ENCODE measurements at regions of chr22 and their contacts with region 1.

Region 1: GRCh38 chr22:36977947-36978660 is 41.1 kb downstream of the TST start:
- DNase-seq: peak; percentile 95
- CTCF ChIP-seq: peak; percentile 95

Region 2: GRCh38 chr22:36757668-36758211 is 220.4 kb before region 1 on chr22:
- CTCF ChIA-PET with region 1: interaction called, 27 read pairs
- POLR2A ChIA-PET with region 1: no interaction called
- DNase-seq: peak; percentile 82
- CTCF ChIP-seq: peak; percentile 83

Region 3: DNA sequence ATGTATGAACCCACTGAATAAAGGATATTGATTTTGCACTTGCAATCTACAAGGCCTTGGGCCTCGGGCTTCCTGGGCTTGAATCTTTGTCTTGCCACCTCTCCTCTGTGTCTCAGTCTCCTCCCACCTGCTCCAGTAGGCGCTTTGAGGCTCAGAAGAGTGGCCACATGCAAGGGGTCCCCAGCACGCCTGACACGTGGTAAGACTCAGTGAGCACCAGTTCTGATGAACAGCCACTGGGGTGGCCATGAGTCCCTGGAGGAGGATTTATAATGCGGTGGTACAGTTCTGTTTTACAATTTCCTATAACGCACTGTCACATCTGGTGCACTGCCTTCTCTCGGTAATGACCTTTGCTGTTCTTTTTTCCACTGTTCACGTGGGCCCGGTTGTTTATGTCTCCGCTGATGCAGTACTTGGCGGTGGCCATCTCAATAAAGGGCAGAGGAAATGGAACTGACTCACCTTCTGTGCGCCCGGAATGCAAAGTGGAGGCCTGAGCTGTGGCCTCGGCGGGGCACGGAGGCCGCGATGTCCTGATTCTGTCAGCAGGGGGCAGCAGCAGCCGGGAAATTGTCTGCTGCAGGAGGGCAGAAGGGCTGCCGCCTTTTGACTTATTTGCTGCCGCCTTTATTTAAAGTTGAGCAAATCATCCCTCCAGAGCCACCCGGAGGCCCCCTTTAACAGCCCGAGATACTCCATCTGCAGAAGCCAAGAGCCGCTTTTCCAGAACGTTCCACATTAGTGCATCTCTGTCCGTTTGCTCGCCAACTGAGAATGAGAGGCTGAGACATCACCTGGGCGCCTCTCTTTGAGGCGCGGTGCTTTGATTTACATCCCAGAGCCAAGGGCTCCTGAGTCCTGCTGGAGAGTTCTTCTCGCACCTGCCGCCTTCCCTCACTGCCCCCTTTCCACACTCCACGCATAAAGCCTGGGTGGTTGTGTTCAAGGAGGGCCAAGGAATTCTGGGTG is 196.2 kb before region 1 on chr22:
- CTCF ChIA-PET with region 1: interaction called, 34 read pairs
- POLR2A ChIA-PET with region 1: no interaction called
- DNase-seq: peak; percentile 90
- CTCF ChIP-seq: peak; percentile 98

Region 4: GRCh38 chr22:36856121-36856791 is 121.8 kb before region 1 on chr22:
- CTCF ChIA-PET with region 1: interaction called, 100 read pairs
- POLR2A ChIA-PET with region 1: no interaction called
- DNase-seq: peak; percentile 82
- CTCF ChIP-seq: peak; percentile 100

Region 5: DNA sequence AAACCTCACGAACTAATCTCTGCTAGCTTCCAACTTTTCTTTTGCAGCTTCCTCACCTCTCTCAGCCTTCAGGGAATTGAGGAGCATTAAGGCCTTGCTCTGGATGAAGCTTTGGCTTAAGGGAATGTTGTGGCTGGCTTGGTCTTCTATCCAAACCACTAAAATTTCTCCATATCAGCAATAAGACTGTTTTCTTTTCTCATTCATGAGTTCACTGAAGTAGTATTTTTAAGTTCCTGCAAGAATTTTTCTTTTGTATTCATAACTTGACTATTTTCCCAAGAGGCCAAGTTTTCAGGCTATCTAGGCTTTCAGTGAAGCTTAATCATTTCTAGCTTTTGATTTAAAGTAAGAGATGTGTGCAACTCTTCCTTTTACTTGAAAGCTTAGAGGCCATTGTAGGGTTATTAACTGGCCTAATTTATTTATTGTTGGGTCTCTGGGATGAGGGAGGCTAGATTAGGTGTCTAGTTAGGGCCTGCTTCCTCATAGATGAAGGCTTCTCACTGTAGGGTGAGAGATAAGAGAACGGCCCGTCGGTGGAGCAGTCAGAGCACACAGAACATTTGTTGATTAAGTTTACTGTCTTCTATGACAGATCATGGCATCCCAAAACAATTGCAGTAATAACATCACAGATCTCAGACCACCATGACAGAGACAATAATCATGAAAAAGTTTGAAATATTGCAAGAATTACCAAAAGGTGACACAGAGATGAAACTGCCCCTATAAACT is 31.5 kb before region 1 on chr22:
- CTCF ChIA-PET with region 1: interaction called, 10 read pairs
- POLR2A ChIA-PET with region 1: no interaction called
- DNase-seq: peak; percentile 36
- CTCF ChIP-seq: peak; percentile 17

Region 6: DNA sequence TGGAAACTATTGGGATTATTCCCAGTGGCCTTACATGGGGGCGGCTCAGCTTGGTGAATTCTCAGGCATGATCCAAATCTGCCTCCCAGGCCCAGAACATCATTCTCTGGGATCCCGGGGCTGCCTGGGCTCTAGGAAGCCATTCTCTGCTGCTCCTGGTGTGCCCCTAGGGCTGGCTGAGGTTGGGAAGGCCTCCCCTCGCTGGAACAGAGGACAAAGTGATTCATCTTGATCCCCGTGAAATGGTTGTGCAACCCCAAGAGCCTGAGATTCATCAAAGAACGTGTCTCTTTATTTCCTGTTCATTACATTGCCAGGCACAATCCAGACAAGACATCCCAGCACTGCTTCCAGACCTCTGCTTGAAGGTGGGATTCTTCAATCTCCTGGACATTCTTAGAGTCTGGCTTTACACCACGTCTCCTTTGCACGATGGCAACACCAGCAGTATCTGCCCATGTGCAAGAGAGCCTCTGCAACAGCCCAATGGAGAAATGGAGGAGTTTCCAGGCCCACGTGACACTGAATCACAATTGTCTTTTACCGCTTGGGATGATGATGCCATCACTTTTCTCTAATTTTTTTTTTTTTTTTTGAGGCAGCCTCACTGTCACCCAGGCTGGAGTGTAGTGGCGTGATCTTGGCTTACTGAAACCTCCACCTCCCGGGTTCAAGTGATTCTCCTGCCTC is 11.1 kb before region 1 on chr22:
- CTCF ChIA-PET with region 1: interaction called, 45 read pairs
- POLR2A ChIA-PET with region 1: interaction called, 3 read pairs
- DNase-seq: no peak
- CTCF ChIP-seq: no peak

Region 7: GRCh38 chr22:37019309-37020125 is 41.4 kb after region 1 on chr22 and contains the starts of genes MPST and TST:
- CTCF ChIA-PET with region 1: interaction called, 12 read pairs
- POLR2A ChIA-PET with region 1: no interaction called
- DNase-seq: peak; percentile 87
- CTCF ChIP-seq: no peak